CD8-positive, alpha-beta T cell (primary cell): ENCODE measurements at regions of chr3 and their contacts with region 1.

Region 1: GRCh38 chr3:4303187-4304123 is at the start of gene SETMAR:
- DNase-seq: peak; percentile 67 to 89 (median 80)
- ATAC-seq: peak; percentile 92
- H3K4me3 ChIP-seq: peak within 1 kb of the TSS; percentile 71 to 83
- H3K4me3 Mint-ChIP-seq: peak within 1 kb of the TSS; percentile 92
- H3K27ac ChIP-seq: peak within 1 kb of the TSS; percentile 70 to 88
- H3K27ac Mint-ChIP-seq: peak within 1 kb of the TSS; percentile 96
- H3K4me1 ChIP-seq: peaks cover 5% of the 10 kb centered on the region
- H3K4me1 Mint-ChIP-seq: peaks cover 24% of the 10 kb centered on the region
- H3K27me3 ChIP-seq: no peaks in the 10 kb centered on the region
- H3K27me3 Mint-ChIP-seq: no peaks in the 10 kb centered on the region
- CTCF ChIP-seq: no peak
- total RNA-seq, gene SETMAR: 8.4 to 9.8 TPM

Region 2: GRCh38 chr3:3126477-3127431 is 1176.7 kb before region 1 on chr3 and contains the start of gene TRNT1:
- CTCF ChIA-PET with region 1: no interaction called
- POLR2A ChIA-PET with region 1: no interaction called
- intact Hi-C with region 1: loop called (anchors 1 kb)
- DNase-seq: peak; percentile 92 to 98 (median 96)
- ATAC-seq: peak; percentile 95
- H3K4me3 ChIP-seq: peak within 1 kb of the TSS; percentile 77 to 93
- H3K4me3 Mint-ChIP-seq: peak within 1 kb of the TSS; percentile 94
- H3K27ac ChIP-seq: peak within 1 kb of the TSS; percentile 97 to 98
- H3K27ac Mint-ChIP-seq: peak within 1 kb of the TSS; percentile 98
- H3K4me1 ChIP-seq: peaks cover 38% of the 10 kb centered on the region
- H3K4me1 Mint-ChIP-seq: peaks cover 41% of the 10 kb centered on the region
- H3K27me3 ChIP-seq: no peaks in the 10 kb centered on the region
- H3K27me3 Mint-ChIP-seq: no peaks in the 10 kb centered on the region
- CTCF ChIP-seq: no peak
- total RNA-seq, gene TRNT1: 26.0 to 26.5 TPM

Region 3: DNA sequence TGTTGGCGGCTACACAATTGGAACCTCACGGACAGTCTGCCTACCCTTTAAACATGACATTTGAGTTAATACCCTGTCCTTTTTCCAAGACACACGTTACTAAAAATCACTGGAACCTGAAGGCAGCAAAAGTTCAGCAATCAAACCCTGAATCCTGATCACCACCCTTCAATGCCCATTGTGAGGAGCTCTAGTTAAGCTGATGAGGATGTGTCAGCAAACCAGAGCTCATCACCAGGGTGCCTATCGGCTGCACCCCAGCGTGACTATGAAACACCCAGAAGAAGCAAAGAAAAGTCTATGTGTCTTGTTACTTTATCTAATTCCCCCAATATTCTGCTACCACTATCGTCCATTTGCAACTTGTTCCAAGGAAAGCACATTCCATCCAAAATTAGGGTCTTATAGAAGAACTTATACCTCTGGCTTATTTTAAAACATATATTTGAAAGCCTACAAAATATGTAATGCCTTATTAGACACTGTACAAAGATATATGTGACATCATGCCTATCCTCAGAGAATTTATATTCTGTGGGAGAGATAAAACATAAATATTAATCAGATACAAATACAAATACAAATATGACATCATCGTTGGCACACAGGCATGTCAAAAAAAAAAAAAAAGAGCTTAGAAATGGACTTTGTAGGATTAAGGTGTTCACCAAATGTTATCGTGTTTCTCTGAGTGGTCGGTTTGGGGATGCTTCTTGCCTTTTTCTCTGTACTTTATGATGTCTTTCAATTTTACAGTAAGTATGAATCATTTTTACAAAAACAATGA is 220.0 kb before region 1 on chr3:
- CTCF ChIA-PET with region 1: no interaction called
- POLR2A ChIA-PET with region 1: no interaction called
- intact Hi-C with region 1: no loop called
- DNase-seq: no peak
- ATAC-seq: no peak
- H3K4me3 ChIP-seq: no peak overlapping the region
- H3K4me3 Mint-ChIP-seq: no peak overlapping the region
- H3K27ac ChIP-seq: no peak overlapping the region
- H3K27ac Mint-ChIP-seq: no peak overlapping the region
- H3K4me1 ChIP-seq: no peaks in the 10 kb centered on the region
- H3K4me1 Mint-ChIP-seq: no peaks in the 10 kb centered on the region
- H3K27me3 ChIP-seq: no peaks in the 10 kb centered on the region
- H3K27me3 Mint-ChIP-seq: no peaks in the 10 kb centered on the region
- CTCF ChIP-seq: no peak

Region 4: DNA sequence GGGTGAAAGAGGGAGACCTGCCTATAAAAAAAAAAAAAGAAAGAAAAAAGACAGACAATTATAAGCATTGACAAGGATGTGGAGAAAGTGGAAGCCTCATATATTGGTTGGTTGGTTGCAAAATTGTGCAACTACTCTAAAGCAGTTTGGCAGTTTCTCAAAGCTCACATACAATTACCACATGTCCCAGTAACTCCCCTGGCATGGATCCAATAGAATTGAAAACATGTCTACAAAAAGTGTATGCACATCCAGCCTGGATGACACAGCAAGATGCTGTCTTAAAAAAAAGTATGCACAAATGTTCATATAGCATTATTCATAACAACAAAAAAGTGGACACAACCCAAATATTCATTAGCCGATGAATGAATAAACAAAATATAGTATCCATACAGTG is 19.2 kb after region 1 on chr3:
- CTCF ChIA-PET with region 1: no interaction called
- POLR2A ChIA-PET with region 1: no interaction called
- intact Hi-C with region 1: no loop called
- DNase-seq: no peak
- ATAC-seq: no peak
- H3K4me3 ChIP-seq: no peak overlapping the region
- H3K4me3 Mint-ChIP-seq: no peak overlapping the region
- H3K27ac ChIP-seq: no peak overlapping the region
- H3K27ac Mint-ChIP-seq: no peak overlapping the region
- H3K4me1 ChIP-seq: no peaks in the 10 kb centered on the region
- H3K4me1 Mint-ChIP-seq: peaks cover 6% of the 10 kb centered on the region
- H3K27me3 ChIP-seq: no peaks in the 10 kb centered on the region
- H3K27me3 Mint-ChIP-seq: no peaks in the 10 kb centered on the region
- CTCF ChIP-seq: no peak

Region 5: DNA sequence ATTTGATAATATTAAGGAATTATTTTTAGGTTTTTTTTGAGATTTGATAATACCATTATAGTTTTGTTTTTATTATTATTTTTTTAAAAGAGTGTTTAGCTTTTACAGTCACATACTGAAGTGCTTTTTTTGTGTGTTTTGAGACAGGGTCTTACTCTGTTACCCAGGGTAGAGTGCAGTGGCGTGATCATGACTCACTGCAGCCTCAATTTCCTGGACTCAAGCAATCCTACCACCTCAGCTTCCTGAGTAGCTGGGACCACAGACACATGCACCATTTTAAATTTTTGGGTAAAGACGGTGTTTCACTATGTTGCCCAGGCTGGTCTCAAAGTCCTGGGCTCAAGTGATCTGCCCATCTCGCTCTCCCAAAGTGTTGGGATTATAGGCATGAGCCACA is 90.6 kb after region 1 on chr3:
- CTCF ChIA-PET with region 1: no interaction called
- POLR2A ChIA-PET with region 1: no interaction called
- intact Hi-C with region 1: no loop called
- DNase-seq: peak in 8 of 9 experiments; percentile 5 to 58 (median 30)
- ATAC-seq: peak; percentile 67
- H3K4me3 ChIP-seq: no peak overlapping the region
- H3K4me3 Mint-ChIP-seq: no peak overlapping the region
- H3K27ac ChIP-seq: peak overlapping the region in 1 of 2 experiments; percentile 47
- H3K27ac Mint-ChIP-seq: no peak overlapping the region
- H3K4me1 ChIP-seq: peaks cover 6% of the 10 kb centered on the region
- H3K4me1 Mint-ChIP-seq: peaks cover 21% of the 10 kb centered on the region
- H3K27me3 ChIP-seq: no peaks in the 10 kb centered on the region
- H3K27me3 Mint-ChIP-seq: no peaks in the 10 kb centered on the region
- CTCF ChIP-seq: no peak

Region 6: GRCh38 chr3:4406746-4407568 is 103.5 kb after region 1 on chr3:
- CTCF ChIA-PET with region 1: no interaction called
- POLR2A ChIA-PET with region 1: no interaction called
- intact Hi-C with region 1: no loop called
- DNase-seq: peak in 1 of 9 experiments; percentile 12
- ATAC-seq: no peak
- H3K4me3 ChIP-seq: no peak overlapping the region
- H3K4me3 Mint-ChIP-seq: no peak overlapping the region
- H3K27ac ChIP-seq: no peak overlapping the region
- H3K27ac Mint-ChIP-seq: no peak overlapping the region
- H3K4me1 ChIP-seq: no peaks in the 10 kb centered on the region
- H3K4me1 Mint-ChIP-seq: peaks cover 13% of the 10 kb centered on the region
- H3K27me3 ChIP-seq: no peaks in the 10 kb centered on the region
- H3K27me3 Mint-ChIP-seq: no peaks in the 10 kb centered on the region
- CTCF ChIP-seq: no peak

Region 7: GRCh38 chr3:4466741-4467521 is 163.5 kb after region 1 on chr3 and contains the start of gene SUMF1:
- CTCF ChIA-PET with region 1: no interaction called
- POLR2A ChIA-PET with region 1: no interaction called
- intact Hi-C with region 1: loop called (anchors 1 to 2 kb)
- DNase-seq: peak; percentile 34 to 85 (median 73)
- ATAC-seq: peak; percentile 93
- H3K4me3 ChIP-seq: peak within 1 kb of the TSS; percentile 75 to 76
- H3K4me3 Mint-ChIP-seq: peak within 1 kb of the TSS; percentile 91
- H3K27ac ChIP-seq: peak within 1 kb of the TSS; percentile 68 to 72
- H3K27ac Mint-ChIP-seq: peak within 1 kb of the TSS; percentile 95
- H3K4me1 ChIP-seq: peaks cover 13% of the 10 kb centered on the region
- H3K4me1 Mint-ChIP-seq: peaks cover 23% of the 10 kb centered on the region
- H3K27me3 ChIP-seq: no peaks in the 10 kb centered on the region
- H3K27me3 Mint-ChIP-seq: no peaks in the 10 kb centered on the region
- CTCF ChIP-seq: no peak
- total RNA-seq, gene SUMF1: 7.6 to 7.8 TPM

Region 8: GRCh38 chr3:4986782-4987537 is 683.5 kb after region 1 on chr3:
- CTCF ChIA-PET with region 1: no interaction called
- POLR2A ChIA-PET with region 1: no interaction called
- intact Hi-C with region 1: loop called in 1 of 2 experiments (anchors 10 kb)
- DNase-seq: peak; percentile 56 to 86 (median 70)
- ATAC-seq: peak; percentile 35
- H3K4me3 ChIP-seq: peak overlapping the region; percentile 52 to 59
- H3K4me3 Mint-ChIP-seq: peak overlapping the region; percentile 83
- H3K27ac ChIP-seq: peak overlapping the region; percentile 19 to 74
- H3K27ac Mint-ChIP-seq: peak overlapping the region; percentile 88
- H3K4me1 ChIP-seq: peaks cover 43% of the 10 kb centered on the region
- H3K4me1 Mint-ChIP-seq: peaks cover 39% of the 10 kb centered on the region
- H3K27me3 ChIP-seq: no peaks in the 10 kb centered on the region
- H3K27me3 Mint-ChIP-seq: no peaks in the 10 kb centered on the region
- CTCF ChIP-seq: no peak

Region 9: DNA sequence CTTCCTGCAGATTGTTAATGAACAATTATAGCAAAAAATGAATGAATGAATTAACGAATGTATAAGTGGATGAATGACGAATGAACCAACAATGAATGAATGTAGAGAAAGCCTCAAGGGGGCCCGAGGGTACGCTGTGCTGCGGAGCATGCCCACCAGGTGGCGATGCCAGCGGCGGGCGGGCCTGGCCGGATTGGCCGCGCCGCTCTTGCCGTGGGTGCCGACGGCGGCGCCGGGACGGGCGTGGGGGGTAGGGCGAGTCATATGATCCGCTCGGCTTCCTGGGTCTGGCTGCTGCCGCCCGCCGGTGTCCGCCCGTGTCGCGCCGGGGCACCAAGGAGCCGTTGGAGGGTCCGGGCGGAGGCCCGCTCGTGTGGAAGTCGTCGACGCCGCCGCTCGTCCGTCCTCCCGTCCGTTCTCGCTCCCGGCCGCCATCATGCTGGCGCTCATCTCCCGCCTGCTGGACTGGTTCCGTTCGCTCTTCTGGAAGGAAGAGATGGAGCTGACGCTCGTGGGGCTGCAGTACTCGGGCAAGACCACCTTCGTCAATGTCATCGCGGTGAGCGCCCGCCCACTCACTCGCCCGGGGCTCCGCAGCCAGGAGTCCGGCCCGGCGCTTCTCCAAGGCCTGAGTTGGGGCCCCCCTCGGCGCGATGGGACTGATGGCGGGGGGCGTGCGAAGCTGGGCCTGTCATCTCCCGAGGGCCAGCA is 818.7 kb after region 1 on chr3 and contains the start of gene ARL8B:
- CTCF ChIA-PET with region 1: interaction called, 3 read pairs
- POLR2A ChIA-PET with region 1: no interaction called
- intact Hi-C with region 1: loop called in 1 of 2 experiments (anchors 5 kb)
- DNase-seq: peak; percentile 80 to 95 (median 91)
- ATAC-seq: peak; percentile 98
- H3K4me3 ChIP-seq: peak within 1 kb of the TSS; percentile 91 to 98
- H3K4me3 Mint-ChIP-seq: peak within 1 kb of the TSS; percentile 81
- H3K27ac ChIP-seq: peak within 1 kb of the TSS; percentile 87 to 92
- H3K27ac Mint-ChIP-seq: peak within 1 kb of the TSS; percentile 81
- H3K4me1 ChIP-seq: peaks cover 31% of the 10 kb centered on the region
- H3K4me1 Mint-ChIP-seq: peaks cover 38% of the 10 kb centered on the region
- H3K27me3 ChIP-seq: no peaks in the 10 kb centered on the region
- H3K27me3 Mint-ChIP-seq: no peaks in the 10 kb centered on the region
- CTCF ChIP-seq: peak; percentile 92
- total RNA-seq, gene ARL8B: 54.1 to 61.7 TPM

Region 10: DNA sequence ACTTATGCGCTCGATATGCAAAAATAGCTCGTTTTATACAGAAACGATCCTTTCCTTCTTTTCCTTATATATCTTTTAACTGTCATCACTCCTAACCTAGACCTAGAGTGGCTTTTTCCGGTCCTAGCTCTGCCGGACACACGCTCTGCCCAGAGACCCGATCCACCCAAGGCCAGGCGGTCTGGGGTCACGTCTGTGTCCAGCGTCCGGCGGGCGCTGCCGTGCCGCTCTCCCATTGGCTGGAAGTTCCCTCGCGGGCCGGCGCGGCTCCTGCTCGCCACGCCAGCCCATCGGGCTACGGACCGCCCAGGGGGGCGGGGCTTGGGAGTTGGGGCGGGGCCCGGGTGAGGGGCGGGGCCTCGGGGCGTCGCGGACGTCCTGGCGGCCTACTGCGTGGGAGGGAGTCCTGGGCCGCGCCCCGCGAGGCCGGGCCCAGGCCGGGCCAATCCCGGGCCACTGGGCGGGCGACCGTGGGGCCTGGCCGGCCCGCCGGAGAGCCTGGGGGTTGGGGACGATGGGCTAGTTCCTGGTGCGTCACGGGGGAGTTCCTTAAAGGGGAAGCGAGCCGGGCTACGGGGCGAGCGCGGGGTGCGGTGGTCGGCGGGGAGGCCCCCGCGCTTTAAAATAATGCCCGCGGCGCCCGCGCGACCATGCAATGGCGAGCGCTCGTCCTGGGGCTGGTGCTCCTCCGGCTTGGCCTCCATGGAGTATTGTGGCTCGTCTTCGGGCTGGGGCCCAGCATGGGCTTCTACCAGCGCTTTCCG is 883.9 kb after region 1 on chr3 and contains the start of gene EDEM1:
- CTCF ChIA-PET with region 1: no interaction called
- POLR2A ChIA-PET with region 1: no interaction called
- intact Hi-C with region 1: loop called (anchors 2 kb)
- DNase-seq: peak; percentile 85 to 98 (median 93)
- ATAC-seq: peak; percentile 82
- H3K4me3 ChIP-seq: peak within 1 kb of the TSS; percentile 84 to 92
- H3K4me3 Mint-ChIP-seq: peak within 1 kb of the TSS; percentile 100
- H3K27ac ChIP-seq: peak within 1 kb of the TSS; percentile 89 to 95
- H3K27ac Mint-ChIP-seq: peak within 1 kb of the TSS; percentile 100
- H3K4me1 ChIP-seq: peaks cover 27% of the 10 kb centered on the region
- H3K4me1 Mint-ChIP-seq: peaks cover 42% of the 10 kb centered on the region
- H3K27me3 ChIP-seq: no peaks in the 10 kb centered on the region
- H3K27me3 Mint-ChIP-seq: no peaks in the 10 kb centered on the region
- CTCF ChIP-seq: no peak
- total RNA-seq, gene EDEM1: 73.0 to 88.9 TPM